Activated T-helper 2 cell treated with anti-CD3 and anti-CD28 coated beads, Interferon-gamma antibody, Interleukin-2, Interleukin-4, amounts not matched to agents 10 μg/mL and 5 μg/mL and 100 μg/mL, durations not matched to agents 14 hours and 24 hours and 36 hours (primary cell): ENCODE measurements at regions of chr3 and their contacts with region 1.

Region 1: DNA sequence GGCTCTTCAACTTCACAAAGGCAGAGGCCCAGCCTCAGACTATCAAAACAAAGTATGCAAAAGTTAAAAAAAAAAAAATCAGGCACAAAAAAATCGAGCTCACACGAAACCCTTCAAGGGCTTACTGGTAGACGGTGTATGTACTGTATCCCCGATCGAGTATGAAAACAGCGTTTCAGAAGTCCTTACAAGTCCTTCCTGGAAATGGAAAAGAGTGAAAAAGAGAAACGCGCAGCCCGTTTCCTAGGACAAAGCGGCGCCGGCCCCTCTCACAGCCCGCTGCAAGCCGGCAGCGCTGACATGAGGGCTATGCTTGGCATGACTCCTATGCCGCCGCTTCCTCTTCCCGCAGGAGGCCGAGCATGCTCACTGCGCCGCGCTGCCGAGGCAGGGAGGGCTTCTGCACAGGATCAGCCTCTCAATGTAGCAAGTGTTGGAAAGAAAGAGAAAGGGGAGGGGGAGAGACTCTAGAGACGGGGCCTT is at the start of gene VGLL4:
- DNase-seq: peak; percentile 65
- H3K4me3 Mint-ChIP-seq: peak within 1 kb of the TSS; percentile 91
- H3K27ac Mint-ChIP-seq: peak within 1 kb of the TSS; percentile 92
- H3K4me1 Mint-ChIP-seq: peaks cover 31% of the 10 kb centered on the region
- H3K27me3 Mint-ChIP-seq: peaks cover 8% of the 10 kb centered on the region
- total RNA-seq, gene VGLL4: 66.6 and 69.8 TPM in 2 replicates

Region 2: GRCh38 chr3:11290743-11291680 is 352.6 kb before region 1 on chr3:
- intact Hi-C with region 1: loop called (anchors 5 kb)
- DNase-seq: peak; percentile 20
- H3K4me3 Mint-ChIP-seq: peak overlapping the region; percentile 37
- H3K27ac Mint-ChIP-seq: peak overlapping the region; percentile 89
- H3K4me1 Mint-ChIP-seq: peaks cover 52% of the 10 kb centered on the region
- H3K27me3 Mint-ChIP-seq: no peaks in the 10 kb centered on the region

Region 3: GRCh38 chr3:11561341-11561943 is 82.2 kb before region 1 on chr3:
- intact Hi-C with region 1: loop called (anchors 5 kb)
- DNase-seq: no peak
- H3K4me3 Mint-ChIP-seq: no peak overlapping the region
- H3K27ac Mint-ChIP-seq: no peak overlapping the region
- H3K4me1 Mint-ChIP-seq: peaks cover 2% of the 10 kb centered on the region
- H3K27me3 Mint-ChIP-seq: no peaks in the 10 kb centered on the region

Region 4: DNA sequence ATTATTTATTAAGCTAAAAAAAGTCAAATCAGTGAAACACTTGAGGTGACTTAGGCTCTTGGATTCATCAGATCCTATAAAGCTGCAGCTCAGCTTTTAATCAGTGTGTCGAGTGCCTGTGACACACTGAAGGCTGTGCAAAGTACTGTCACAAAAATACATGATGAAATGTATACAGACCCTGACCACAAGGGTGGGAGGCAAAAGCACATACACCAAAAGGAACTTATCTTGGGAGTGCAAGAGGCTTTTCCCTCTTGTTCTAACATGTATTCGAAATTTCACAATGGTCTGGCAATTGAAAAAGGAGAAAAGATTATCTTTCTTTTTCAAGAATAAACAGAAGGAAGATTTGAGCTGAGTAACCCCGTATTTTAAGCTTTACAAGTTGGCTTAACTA is 35.8 kb before region 1 on chr3:
- intact Hi-C with region 1: loop called (anchors 5 kb)
- DNase-seq: no peak
- H3K4me3 Mint-ChIP-seq: no peak overlapping the region
- H3K27ac Mint-ChIP-seq: no peak overlapping the region
- H3K4me1 Mint-ChIP-seq: peaks cover 54% of the 10 kb centered on the region
- H3K27me3 Mint-ChIP-seq: no peaks in the 10 kb centered on the region

Region 5: GRCh38 chr3:11671648-11672100 is 28.0 kb after region 1 on chr3:
- intact Hi-C with region 1: no loop called
- DNase-seq: no peak
- H3K4me3 Mint-ChIP-seq: no peak overlapping the region
- H3K27ac Mint-ChIP-seq: no peak overlapping the region
- H3K4me1 Mint-ChIP-seq: peaks cover 2% of the 10 kb centered on the region
- H3K27me3 Mint-ChIP-seq: peaks cover 10% of the 10 kb centered on the region

Region 6: GRCh38 chr3:11803977-11804892 is 160.6 kb after region 1 on chr3:
- intact Hi-C with region 1: loop called (anchors 10 kb)
- DNase-seq: peak; percentile 19
- H3K4me3 Mint-ChIP-seq: no peak overlapping the region
- H3K27ac Mint-ChIP-seq: no peak overlapping the region
- H3K4me1 Mint-ChIP-seq: peaks cover 27% of the 10 kb centered on the region
- H3K27me3 Mint-ChIP-seq: no peaks in the 10 kb centered on the region